Endothelial cell of umbilical vein (primary cell): ENCODE measurements at regions of chr6 and their contacts with region 1.

Region 1: DNA sequence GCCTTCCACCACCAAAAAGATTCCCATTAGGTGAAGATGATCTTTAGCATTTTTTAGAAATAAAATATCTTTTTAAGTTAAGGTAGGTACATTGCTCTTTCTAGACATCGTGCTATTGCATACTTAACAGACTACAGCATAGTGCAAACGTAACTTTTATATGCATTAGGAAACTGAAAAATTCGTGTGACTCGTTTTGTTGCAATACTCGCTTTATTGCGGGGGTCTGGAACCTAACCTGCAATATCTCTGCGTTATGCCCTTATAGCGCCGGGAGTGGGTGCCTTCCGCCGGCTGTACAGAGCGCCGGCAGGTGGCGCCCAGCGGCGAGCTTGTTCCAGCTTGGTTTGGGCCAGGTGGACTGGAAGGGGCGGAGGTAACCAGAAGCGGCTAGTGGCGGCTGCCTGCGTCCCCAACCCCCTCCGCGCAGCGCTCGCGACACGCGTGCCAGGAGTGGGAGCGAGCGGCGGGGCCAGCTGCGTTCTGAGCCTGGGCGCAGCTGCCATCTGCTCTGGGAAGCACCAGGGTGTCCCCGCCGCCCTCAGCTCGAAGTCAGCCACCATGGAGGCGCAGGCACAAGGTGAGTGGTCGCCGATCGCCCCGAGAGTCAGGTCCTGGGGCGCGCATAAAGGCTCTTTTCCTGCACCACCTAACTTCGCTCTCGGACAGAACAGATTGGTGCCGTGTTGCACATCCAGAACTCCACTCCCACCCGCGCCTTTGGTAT is at the start of gene TPD52L1:
- DNase-seq: peak; percentile 62
- H3K4me3 ChIP-seq: peak within 1 kb of the TSS; percentile 1 to 45 (median 27)
- H3K27ac ChIP-seq: no peak within 1 kb of the TSS
- H3K4me1 ChIP-seq: peaks cover 14% of the 10 kb centered on the region
- H3K27me3 ChIP-seq: peaks cover 0 to 10% of the 10 kb centered on the region in 2 experiments
- CTCF ChIP-seq: peak; percentile 82 to 89
- POLR2A ChIP-seq: no peak
- total RNA-seq, gene TPD52L1: 0.29 and 0.83 TPM in 2 replicates

Region 2: GRCh38 chr6:125001684-125002405 is 151.7 kb before region 1 on chr6:
- CTCF ChIA-PET with region 1: no interaction called
- POLR2A ChIA-PET with region 1: no interaction called
- dilution Hi-C with region 1: no loop called
- intact Hi-C with region 1: no loop called
- DNase-seq: peak; percentile 61
- H3K4me3 ChIP-seq: peak overlapping the region; percentile 2 to 71 (median 61)
- H3K27ac ChIP-seq: peak overlapping the region; percentile 69
- H3K4me1 ChIP-seq: peaks cover 16% of the 10 kb centered on the region
- H3K27me3 ChIP-seq: no peaks in the 10 kb centered on the region
- CTCF ChIP-seq: no peak
- POLR2A ChIP-seq: no peak

Region 3: GRCh38 chr6:125165256-125165655 is 11.7 kb after region 1 on chr6:
- CTCF ChIA-PET with region 1: interaction called, 13 read pairs
- POLR2A ChIA-PET with region 1: no interaction called
- dilution Hi-C with region 1: no loop called
- intact Hi-C with region 1: no loop called
- DNase-seq: no peak
- H3K4me3 ChIP-seq: no peak overlapping the region
- H3K27ac ChIP-seq: no peak overlapping the region
- H3K4me1 ChIP-seq: no peaks in the 10 kb centered on the region
- H3K27me3 ChIP-seq: peaks cover 0 to 1% of the 10 kb centered on the region in 2 experiments
- CTCF ChIP-seq: no peak
- POLR2A ChIP-seq: no peak

Region 4: GRCh38 chr6:125191916-125192609 is 38.5 kb after region 1 on chr6:
- CTCF ChIA-PET with region 1: interaction called, 11 read pairs
- POLR2A ChIA-PET with region 1: no interaction called
- dilution Hi-C with region 1: no loop called
- intact Hi-C with region 1: no loop called
- DNase-seq: peak; percentile 73
- H3K4me3 ChIP-seq: no peak overlapping the region
- H3K27ac ChIP-seq: no peak overlapping the region
- H3K4me1 ChIP-seq: no peaks in the 10 kb centered on the region
- H3K27me3 ChIP-seq: no peaks in the 10 kb centered on the region
- CTCF ChIP-seq: peak; percentile 70 to 76
- POLR2A ChIP-seq: no peak

Region 5: DNA sequence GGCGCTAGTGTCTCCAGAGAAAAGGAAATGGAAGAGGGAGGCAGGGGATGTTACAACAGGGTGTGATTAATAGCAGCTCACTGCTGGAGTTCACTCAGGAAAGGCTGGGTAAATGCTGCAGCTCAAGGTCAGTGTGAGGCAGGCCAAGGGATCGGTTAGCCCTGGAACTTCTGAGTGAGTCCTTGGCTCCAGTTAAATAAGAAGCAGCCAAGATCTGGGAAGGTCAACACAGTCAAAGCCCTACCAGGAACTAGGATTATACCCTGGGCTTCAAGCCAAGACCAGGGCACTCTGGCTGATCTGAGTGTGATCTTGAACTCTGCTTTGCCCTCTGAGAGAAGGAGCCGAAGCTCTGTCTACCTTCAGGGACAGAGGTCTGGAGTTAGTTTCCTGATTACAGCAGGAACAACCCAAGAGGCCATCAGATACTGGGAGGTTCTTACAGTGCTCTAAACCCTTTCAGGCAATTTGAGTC is 44.3 kb after region 1 on chr6:
- CTCF ChIA-PET with region 1: interaction called, 11 read pairs
- POLR2A ChIA-PET with region 1: no interaction called
- dilution Hi-C with region 1: no loop called
- intact Hi-C with region 1: no loop called
- DNase-seq: peak; percentile 62
- H3K4me3 ChIP-seq: no peak overlapping the region
- H3K27ac ChIP-seq: no peak overlapping the region
- H3K4me1 ChIP-seq: peaks cover 17% of the 10 kb centered on the region
- H3K27me3 ChIP-seq: no peaks in the 10 kb centered on the region
- CTCF ChIP-seq: no peak
- POLR2A ChIP-seq: no peak

Region 6: DNA sequence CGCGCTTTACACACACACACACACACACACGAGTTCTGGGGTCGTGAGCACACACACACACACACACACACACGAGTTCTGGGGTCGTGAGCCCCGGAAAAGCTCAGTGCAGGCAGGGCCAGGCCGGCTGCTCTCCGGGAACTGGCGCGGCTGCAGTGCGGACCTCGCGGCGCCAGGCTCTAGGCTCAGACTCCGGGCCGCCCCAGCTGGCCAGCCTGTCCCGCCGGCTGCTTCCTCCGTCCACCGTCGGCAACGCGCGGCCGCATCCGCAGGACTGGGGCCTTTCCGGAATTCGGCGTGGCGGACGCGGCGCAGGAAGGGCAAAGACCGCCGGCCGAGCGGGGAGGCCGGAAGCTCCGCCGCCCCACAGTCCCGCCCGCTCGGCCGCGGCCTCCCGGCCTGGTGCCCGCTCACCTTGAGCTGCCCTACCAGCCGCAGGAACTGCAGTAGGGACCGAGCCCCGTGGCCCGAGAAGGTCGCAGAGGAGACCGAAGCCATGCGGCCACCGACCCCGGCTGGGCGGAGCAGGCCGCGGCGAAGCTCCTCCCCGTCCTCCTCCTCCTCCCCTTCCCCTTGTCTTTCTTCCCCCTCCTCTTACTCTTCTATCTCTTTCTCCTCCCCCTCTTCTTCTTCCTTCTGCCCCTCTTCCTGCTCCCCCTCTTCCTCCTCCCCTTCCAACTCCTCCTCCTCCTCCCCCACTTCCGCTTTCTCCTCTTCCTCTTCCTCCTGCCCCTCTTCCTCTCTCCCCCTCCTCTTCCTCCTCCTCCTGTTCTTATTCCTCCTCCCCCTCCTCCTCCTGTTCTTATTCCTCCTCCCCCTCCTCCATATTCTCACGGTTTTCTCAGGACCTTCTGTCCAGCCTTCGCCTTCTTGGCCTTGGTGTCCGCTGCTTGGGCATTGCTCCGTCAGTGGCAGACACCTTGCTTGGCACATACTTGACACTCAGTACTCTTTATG is 148.2 kb after region 1 on chr6 and contains the start of gene HDDC2:
- CTCF ChIA-PET with region 1: interaction called, 10 read pairs
- POLR2A ChIA-PET with region 1: no interaction called
- dilution Hi-C with region 1: no loop called
- intact Hi-C with region 1: loop called (anchors 2 kb)
- DNase-seq: peak; percentile 78
- H3K4me3 ChIP-seq: peak within 1 kb of the TSS; percentile 10 to 56 (median 47)
- H3K27ac ChIP-seq: peak within 1 kb of the TSS; percentile 72
- H3K4me1 ChIP-seq: peaks cover 10% of the 10 kb centered on the region
- H3K27me3 ChIP-seq: peaks cover 8 to 12% of the 10 kb centered on the region in 2 experiments
- CTCF ChIP-seq: no peak
- POLR2A ChIP-seq: peak; percentile 49
- total RNA-seq, gene HDDC2: 12.6 and 13.6 TPM in 2 replicates

Region 7: DNA sequence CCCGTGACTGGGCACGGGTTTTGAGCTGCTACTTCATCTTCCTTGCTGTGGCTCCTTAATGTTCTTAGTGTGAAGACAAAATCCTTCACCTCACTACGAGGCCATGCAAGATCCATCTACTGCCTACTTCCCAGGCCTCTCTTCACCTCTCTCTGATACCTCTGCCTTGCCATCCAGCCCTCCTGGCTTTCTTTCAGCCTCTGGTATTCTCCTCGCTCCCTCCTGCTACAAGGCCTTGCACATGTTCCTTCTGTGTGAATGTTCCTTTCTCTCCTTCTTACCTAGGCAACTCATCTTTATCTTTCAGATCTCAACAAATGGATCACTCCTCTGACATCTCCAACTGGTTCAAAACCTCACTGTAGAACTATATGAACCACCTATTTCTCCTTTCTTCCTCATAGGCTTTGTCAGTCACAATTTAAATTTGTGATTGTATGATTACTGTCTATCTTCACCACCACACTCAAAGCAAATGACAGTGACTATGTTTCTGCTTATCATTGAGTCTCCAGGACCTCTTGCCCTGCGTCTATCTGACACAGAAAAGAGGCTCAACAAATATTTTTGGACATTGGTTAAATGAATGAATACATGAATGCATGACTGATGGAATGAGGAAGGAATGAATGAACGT is 615.7 kb after region 1 on chr6:
- CTCF ChIA-PET with region 1: interaction called, 14 read pairs
- POLR2A ChIA-PET with region 1: no interaction called
- dilution Hi-C with region 1: no loop called
- intact Hi-C with region 1: loop called (anchors 1 kb)
- DNase-seq: no peak
- H3K4me3 ChIP-seq: no peak overlapping the region
- H3K27ac ChIP-seq: no peak overlapping the region
- H3K4me1 ChIP-seq: no peaks in the 10 kb centered on the region
- H3K27me3 ChIP-seq: peaks cover 4 to 19% of the 10 kb centered on the region in 2 experiments
- CTCF ChIP-seq: no peak
- POLR2A ChIP-seq: no peak